Naive thymus-derived CD8-positive, alpha-beta T cell (primary cell): ENCODE measurements at regions of chr4 and their contacts with region 1.

Region 1: GRCh38 chr4:76213415-76214176 is at the start of gene SCARB2:
- DNase-seq: peak; percentile 61 to 84 (median 74)
- ATAC-seq: peak; percentile 67 to 73
- H3K4me3 Mint-ChIP-seq: peak within 1 kb of the TSS; percentile 85 to 99 (median 94)
- H3K27ac Mint-ChIP-seq: peak within 1 kb of the TSS; percentile 89 to 99 (median 98)
- H3K4me1 Mint-ChIP-seq: peaks cover 27 to 68% (median 65%) of the 10 kb centered on the region in 4 donors
- H3K27me3 Mint-ChIP-seq: no peaks in the 10 kb centered on the region
- polyA plus RNA-seq, gene SCARB2: 11.0 to 14.3 (median 14.0) TPM

Region 2: GRCh38 chr4:76156635-76157034 is 57.0 kb before region 1 on chr4:
- POLR2A ChIA-PET with region 1: no interaction called
- DNase-seq: no peak
- ATAC-seq: no peak
- H3K4me3 Mint-ChIP-seq: no peak overlapping the region
- H3K27ac Mint-ChIP-seq: no peak overlapping the region
- H3K4me1 Mint-ChIP-seq: no peaks in the 10 kb centered on the region
- H3K27me3 Mint-ChIP-seq: no peaks in the 10 kb centered on the region

Region 3: GRCh38 chr4:76198411-76199237 is 15.0 kb before region 1 on chr4:
- POLR2A ChIA-PET with region 1: interaction called, 13 read pairs
- DNase-seq: peak in 5 of 10 donors; percentile 9 to 29 (median 20)
- ATAC-seq: peak; percentile 27 to 56
- H3K4me3 Mint-ChIP-seq: peak overlapping the region in 8 of 10 donors; percentile 9 to 57 (median 44)
- H3K27ac Mint-ChIP-seq: peak overlapping the region; percentile 0 to 78 (median 46)
- H3K4me1 Mint-ChIP-seq: peaks cover 30 to 73% (median 60%) of the 10 kb centered on the region in 4 donors
- H3K27me3 Mint-ChIP-seq: no peaks in the 10 kb centered on the region